Activated naive CD4-positive, alpha-beta T cell treated with anti-CD3 and anti-CD28 coated beads, Interleukin-2, amount 10 ng/mL, durations not matched to agents 7 days and 5 days (primary cell): ENCODE measurements at regions of chr1 and their contacts with region 1.

Region 1: DNA sequence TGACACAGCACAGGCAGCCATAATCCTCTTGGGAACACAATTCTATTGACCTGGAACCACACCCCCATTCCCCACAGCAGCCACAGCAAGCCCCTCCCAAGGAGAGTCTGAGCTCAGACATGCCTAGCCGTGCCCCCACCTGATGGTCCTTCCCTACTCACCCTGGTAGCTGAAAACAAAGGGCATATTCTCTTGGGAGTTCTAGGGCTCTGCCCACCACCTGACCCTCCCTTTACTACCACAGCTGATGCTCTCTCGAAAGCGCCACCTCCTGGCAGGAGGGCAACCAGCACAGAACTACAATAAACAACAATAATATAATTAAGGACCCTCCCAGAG is 184.8 kb upstream of the COA6 start:
- DNase-seq: peak; percentile 52
- H3K4me3 Mint-ChIP-seq: no peak overlapping the region
- H3K27ac Mint-ChIP-seq: no peak overlapping the region
- H3K4me1 Mint-ChIP-seq: peaks cover 2% of the 10 kb centered on the region
- H3K27me3 Mint-ChIP-seq: peaks cover 73% of the 10 kb centered on the region

Region 2: DNA sequence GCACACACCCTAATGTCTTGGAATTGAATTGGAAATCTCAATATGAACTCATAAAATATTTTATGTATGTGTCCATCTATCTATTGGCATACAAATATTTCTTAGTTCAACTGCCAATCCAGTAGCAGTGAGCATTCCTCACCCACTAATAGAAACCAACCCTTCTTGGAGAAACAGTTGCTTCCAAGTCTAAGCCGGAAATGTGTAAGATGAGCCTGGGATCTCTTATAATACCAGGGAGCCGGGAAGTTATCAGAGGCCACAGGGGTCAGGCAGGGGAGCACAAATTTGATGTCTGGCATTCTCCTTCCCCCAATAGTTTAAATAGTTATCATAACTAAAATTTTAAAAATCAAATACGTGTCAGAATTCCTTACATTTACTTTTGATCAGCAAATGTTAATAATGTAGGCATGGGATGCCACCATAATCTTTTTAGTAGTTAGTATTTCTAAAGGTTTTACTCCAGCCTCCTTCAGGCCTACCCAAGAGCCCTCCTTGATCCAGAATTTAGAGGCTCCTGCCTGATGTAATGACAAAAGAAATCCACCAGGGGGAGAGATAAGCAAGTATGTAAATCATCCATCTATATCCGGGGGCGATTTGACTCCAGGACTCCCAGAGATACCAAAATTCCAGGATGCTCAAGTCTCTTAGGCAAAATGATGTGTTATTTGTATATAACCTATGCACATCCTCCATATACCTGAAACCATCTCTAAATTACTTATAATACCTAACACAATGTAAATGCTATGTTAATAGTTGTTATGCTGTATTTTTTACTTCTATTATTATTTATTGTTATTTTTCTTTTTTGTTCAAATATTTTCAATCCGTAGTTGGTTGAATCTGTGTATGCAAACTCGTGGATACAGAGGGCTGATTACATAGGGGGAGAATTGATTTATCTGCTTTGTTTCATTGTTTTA is 33.8 kb before region 1 on chr1:
- CTCF ChIA-PET with region 1: interaction called, 17 read pairs
- DNase-seq: peak; percentile 32
- H3K4me3 Mint-ChIP-seq: no peak overlapping the region
- H3K27ac Mint-ChIP-seq: no peak overlapping the region
- H3K4me1 Mint-ChIP-seq: no peaks in the 10 kb centered on the region
- H3K27me3 Mint-ChIP-seq: peaks cover 18% of the 10 kb centered on the region

Region 3: DNA sequence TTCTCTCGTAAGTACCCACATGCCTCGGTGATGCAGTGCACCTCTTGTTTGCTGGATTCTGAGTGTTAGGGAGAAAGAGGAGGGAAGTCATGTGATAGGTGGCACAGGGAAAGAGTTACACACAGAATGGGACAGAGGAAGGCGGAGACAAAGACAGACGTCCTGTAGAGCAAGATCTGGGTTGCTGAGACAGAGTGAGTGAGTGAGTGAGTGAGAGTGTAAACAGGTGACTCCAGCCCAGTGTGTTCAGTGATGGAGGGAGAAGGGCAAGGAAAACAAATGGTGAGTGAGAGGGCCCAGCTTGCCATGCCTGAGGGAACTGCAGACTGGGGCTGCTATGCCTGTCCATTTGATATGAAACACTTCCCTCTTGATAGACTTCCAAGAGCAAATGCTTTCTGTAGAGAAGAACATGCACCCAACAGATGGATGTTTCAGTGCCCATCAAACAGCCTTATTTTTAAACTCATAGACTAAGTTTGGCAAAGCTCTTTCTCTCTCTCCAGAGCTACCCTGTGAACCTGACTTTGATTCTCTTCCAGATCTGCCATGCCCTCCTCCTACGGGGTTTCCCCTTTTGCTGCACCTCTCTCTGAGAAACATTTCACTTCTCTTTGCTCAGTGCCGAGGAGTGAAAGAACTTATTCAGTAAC is 25.0 kb before region 1 on chr1:
- CTCF ChIA-PET with region 1: interaction called, 41 read pairs
- DNase-seq: peak; percentile 26
- H3K4me3 Mint-ChIP-seq: no peak overlapping the region
- H3K27ac Mint-ChIP-seq: no peak overlapping the region
- H3K4me1 Mint-ChIP-seq: peaks cover 33% of the 10 kb centered on the region
- H3K27me3 Mint-ChIP-seq: peaks cover 12% of the 10 kb centered on the region

Region 4: DNA sequence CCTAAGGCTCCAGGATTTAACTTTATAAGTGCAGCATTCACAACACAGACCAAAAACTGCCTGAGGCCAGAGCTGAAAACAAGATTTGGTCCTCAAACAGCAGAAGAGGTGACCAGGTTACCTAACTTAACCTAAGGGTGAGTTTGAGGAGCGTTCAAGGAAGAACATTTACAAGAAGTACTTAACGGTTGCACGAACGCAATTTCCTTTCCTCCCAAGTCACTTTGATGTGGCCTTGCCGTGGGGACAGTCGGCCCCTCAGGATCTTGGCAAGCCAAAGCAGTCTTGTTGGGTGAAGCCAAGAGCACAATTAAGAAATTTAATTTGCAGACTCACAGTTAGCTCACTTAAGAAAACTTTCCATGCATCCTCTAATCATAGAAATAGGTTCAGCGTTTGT is 17.8 kb before region 1 on chr1:
- CTCF ChIA-PET with region 1: interaction called, 41 read pairs
- DNase-seq: peak; percentile 63
- H3K4me3 Mint-ChIP-seq: peak overlapping the region; percentile 43
- H3K27ac Mint-ChIP-seq: peak overlapping the region; percentile 92
- H3K4me1 Mint-ChIP-seq: peaks cover 60% of the 10 kb centered on the region
- H3K27me3 Mint-ChIP-seq: peaks cover 14% of the 10 kb centered on the region

Region 5: DNA sequence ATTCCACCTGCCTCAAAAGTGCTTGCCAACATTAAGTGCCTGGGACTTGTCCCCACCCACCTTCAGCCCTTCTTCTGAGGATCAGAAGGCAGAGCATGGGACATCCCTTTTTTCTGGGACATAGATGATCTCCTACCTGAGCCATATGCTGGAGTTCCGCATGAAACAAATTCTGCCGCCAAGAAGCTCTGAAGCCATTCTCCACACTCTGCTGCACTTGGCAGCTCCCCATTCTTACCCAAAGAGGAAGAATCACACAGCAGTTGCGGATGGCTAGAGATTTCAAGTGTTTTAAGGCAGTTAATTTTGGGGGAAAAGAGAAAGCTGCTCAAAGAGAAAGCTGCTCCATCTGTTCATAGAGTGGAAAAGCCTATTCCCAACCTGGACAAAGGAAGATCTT is 12.4 kb before region 1 on chr1:
- CTCF ChIA-PET with region 1: interaction called, 41 read pairs
- DNase-seq: no peak
- H3K4me3 Mint-ChIP-seq: no peak overlapping the region
- H3K27ac Mint-ChIP-seq: no peak overlapping the region
- H3K4me1 Mint-ChIP-seq: peaks cover 25% of the 10 kb centered on the region
- H3K27me3 Mint-ChIP-seq: peaks cover 51% of the 10 kb centered on the region